CD4-positive, alpha-beta memory T cell (primary cell): ENCODE measurements at regions of chr4 and their contacts with region 1.

Region 1: GRCh38 chr4:13733817-13734216 is 106.3 kb upstream of the BOD1L1 start:
- DNase-seq: no peak
- H3K4me3 ChIP-seq: no peak overlapping the region
- H3K4me3 Mint-ChIP-seq: no peak overlapping the region
- H3K27ac ChIP-seq: no peak overlapping the region
- H3K27ac Mint-ChIP-seq: no peak overlapping the region
- H3K4me1 ChIP-seq: no peaks in the 10 kb centered on the region
- H3K4me1 Mint-ChIP-seq: no peaks in the 10 kb centered on the region
- H3K27me3 ChIP-seq: no peaks in the 10 kb centered on the region
- H3K27me3 Mint-ChIP-seq: peaks cover 4% of the 10 kb centered on the region in 2 donors

Region 2: DNA sequence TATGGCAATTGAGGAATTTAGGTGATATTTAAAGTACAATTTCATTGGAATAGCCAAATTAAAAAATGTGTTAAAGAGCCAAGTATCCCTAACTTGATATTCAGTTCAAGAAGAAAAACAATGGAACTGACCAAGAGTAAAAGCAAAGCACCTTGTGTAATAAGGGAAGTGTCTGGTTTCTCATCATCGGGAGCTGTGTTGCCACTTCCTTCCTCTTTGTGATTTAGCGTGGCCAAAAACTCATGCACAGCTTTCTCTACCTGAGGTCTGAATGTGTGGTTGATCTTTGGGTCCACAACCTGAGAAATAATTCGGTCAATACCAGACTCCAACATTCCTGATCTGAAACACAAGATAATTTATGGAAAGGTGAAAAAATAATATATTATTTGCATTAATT is 118.7 kb before region 1 on chr4:
- CTCF ChIA-PET with region 1: no interaction called
- POLR2A ChIA-PET with region 1: no interaction called
- intact Hi-C with region 1: no loop called
- DNase-seq: no peak
- H3K4me3 ChIP-seq: no peak overlapping the region
- H3K4me3 Mint-ChIP-seq: peak overlapping the region in 2 of 8 donors; percentile 31 to 54
- H3K27ac ChIP-seq: no peak overlapping the region
- H3K27ac Mint-ChIP-seq: peak overlapping the region in 3 of 7 donors; percentile 22 to 35 (median 33)
- H3K4me1 ChIP-seq: peaks cover 17% of the 10 kb centered on the region
- H3K4me1 Mint-ChIP-seq: peaks cover 15 to 32% (median 27%) of the 10 kb centered on the region in 4 donors
- H3K27me3 ChIP-seq: no peaks in the 10 kb centered on the region
- H3K27me3 Mint-ChIP-seq: no peaks in the 10 kb centered on the region

Region 3: GRCh38 chr4:13907255-13907751 is 173.5 kb after region 1 on chr4:
- CTCF ChIA-PET with region 1: no interaction called
- POLR2A ChIA-PET with region 1: no interaction called
- intact Hi-C with region 1: loop called (anchors 5 kb)
- DNase-seq: no peak
- H3K4me3 ChIP-seq: no peak overlapping the region
- H3K4me3 Mint-ChIP-seq: no peak overlapping the region
- H3K27ac ChIP-seq: no peak overlapping the region
- H3K27ac Mint-ChIP-seq: no peak overlapping the region
- H3K4me1 ChIP-seq: no peaks in the 10 kb centered on the region
- H3K4me1 Mint-ChIP-seq: no peaks in the 10 kb centered on the region
- H3K27me3 ChIP-seq: no peaks in the 10 kb centered on the region
- H3K27me3 Mint-ChIP-seq: no peaks in the 10 kb centered on the region